AG04450 (cell line): ENCODE measurements at regions of chr1 and their contacts with region 1.

Region 1: GRCh38 chr1:58783993-58784757 is at the start of gene JUN:
- DNase-seq: peak; percentile 99
- H3K4me3 ChIP-seq: peak within 1 kb of the TSS; percentile 93
- H3K27ac ChIP-seq: peak within 1 kb of the TSS; percentile 99
- H3K27me3 ChIP-seq: no peaks in the 10 kb centered on the region
- CTCF ChIP-seq: no peak
- polyA plus RNA-seq, gene JUN: 48.7 and 56.5 TPM in 2 replicates

Region 2: DNA sequence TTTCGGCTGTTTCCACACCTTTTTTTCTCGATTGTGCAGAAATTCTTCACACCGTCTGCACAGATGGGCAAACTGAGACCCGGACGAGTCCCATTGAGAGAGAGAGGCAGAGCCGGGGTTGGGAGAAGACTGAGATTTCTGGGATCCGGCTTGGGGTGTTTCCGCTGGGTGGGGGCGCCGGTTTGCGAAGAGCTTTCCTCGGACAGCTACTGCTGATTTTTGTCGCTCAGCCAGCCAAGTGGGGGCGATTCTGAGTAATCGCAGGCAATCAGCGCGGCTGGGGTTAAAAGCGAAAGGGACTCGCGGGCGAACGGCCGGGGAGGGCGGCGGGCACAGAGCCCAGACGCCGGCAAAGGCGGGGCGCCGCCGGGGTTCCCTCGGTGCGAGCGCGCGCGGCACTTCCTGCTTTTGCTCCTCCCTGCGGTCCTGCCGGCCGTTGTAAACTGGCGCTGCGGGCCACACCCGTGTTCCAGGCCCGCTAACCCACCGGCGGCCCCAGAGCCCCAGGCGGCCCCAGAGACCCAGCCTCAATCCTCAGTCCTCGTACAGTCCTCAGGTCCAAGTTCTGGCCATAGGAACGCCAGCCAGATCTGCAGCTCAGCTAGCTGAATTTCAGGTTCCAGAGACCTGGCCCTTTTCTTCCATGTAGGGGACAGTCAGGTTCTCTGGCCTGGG is 32.0 kb after region 1 on chr1:
- CTCF ChIA-PET with region 1: no interaction called
- POLR2A ChIA-PET with region 1: interaction called, 10 read pairs
- DNase-seq: peak; percentile 70
- H3K4me3 ChIP-seq: peak overlapping the region; percentile 61
- H3K27ac ChIP-seq: peak overlapping the region; percentile 90
- H3K27me3 ChIP-seq: no peaks in the 10 kb centered on the region
- CTCF ChIP-seq: peak; percentile 12; the same call in 1 of the 2 replicates

Region 3: DNA sequence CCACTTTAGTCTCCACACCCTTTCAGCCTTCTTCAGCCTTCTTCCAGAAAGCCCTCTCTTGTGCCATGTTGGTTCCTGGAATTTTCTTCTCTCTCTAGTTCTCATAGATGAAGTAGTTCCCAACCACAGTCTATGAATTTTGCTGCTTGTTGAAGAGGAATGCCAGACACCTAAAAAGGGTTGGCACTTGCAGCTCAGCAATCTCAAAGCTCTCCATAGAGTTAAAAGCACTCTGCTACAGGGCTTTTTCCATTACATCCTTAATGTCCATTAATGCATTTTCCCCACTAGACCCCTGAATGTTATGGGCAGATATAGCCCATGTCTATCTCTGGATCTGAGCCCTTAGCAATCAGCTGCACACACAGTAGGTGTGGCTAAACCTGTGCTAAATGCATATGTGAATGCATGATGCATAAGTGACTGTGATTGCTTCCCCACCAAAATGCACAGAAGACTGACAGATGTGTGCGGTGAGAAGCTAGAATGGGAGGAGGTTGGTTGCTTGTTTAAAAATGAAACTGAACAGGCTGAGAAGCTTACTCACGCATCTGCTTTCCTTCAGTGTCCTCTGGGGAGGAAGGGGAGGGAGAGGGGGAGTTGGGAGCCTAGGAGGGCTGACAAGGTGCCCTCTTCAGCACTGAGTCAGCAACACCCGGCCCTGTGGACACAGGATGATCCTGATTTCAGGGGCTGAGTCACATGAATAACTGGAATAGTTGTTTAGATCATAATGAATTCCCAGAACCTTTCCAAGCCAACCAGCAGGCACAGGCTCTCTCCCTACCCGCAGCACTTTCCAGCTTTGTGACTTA is 366.6 kb after region 1 on chr1:
- CTCF ChIA-PET with region 1: no interaction called
- POLR2A ChIA-PET with region 1: interaction called, 12 read pairs
- DNase-seq: peak; percentile 99
- H3K4me3 ChIP-seq: peak overlapping the region; percentile 35
- H3K27ac ChIP-seq: peak overlapping the region; percentile 97
- H3K27me3 ChIP-seq: no peaks in the 10 kb centered on the region
- CTCF ChIP-seq: peak; percentile 2; the same call in 1 of the 2 replicates

Region 4: DNA sequence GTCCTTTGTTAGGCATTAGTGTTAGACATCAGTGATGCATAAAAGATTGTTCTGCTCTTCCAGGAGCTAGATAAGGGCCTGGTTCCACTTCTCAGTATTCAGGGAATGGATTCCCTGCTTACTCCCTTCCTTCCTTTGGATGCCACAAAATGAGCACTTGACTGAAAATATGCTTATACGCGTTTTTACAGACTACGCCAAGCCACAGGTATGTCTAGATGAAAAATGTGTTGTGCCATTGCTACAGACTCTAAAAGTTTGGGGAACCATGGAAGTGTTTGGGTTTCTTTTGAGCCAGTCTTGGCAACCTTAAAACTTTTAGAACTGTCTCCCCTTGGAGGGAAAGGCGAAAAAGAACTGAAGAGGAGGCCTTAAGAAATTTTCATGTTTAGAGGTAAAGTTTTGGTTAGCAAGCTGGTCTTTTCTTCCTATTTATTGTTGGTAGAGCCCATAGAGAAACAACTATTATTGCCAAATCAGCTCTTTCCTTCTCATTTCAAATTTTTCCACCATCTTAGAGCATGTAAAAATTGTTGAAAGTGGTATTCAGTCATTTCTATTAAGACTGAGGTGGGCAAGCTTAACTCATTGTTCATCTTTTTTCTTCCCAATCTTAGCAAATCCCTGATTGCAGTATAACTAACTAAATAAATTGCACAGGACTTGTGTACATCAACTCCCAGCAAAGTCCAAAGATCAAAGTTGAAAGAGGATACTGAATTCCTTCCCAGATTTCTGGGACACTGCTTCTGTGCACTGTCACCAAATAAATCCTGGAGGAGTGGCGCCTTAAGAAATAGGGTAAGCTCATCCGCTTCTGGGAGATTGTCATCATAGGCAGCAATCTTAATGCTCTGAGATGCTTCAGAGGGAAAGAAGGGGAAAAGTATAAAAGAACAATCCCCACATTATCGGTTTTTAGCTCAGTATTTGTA is 531.6 kb after region 1 on chr1:
- CTCF ChIA-PET with region 1: interaction called, 5 read pairs
- POLR2A ChIA-PET with region 1: interaction called, 13 read pairs
- DNase-seq: no peak
- H3K4me3 ChIP-seq: no peak overlapping the region
- H3K27ac ChIP-seq: no peak overlapping the region
- H3K27me3 ChIP-seq: no peaks in the 10 kb centered on the region
- CTCF ChIP-seq: no peak

Region 5: GRCh38 chr1:59699227-59699847 is 915.2 kb after region 1 on chr1:
- CTCF ChIA-PET with region 1: interaction called, 9 read pairs
- POLR2A ChIA-PET with region 1: interaction called, 14 read pairs
- DNase-seq: no peak
- H3K4me3 ChIP-seq: no peak overlapping the region
- H3K27ac ChIP-seq: no peak overlapping the region
- H3K27me3 ChIP-seq: no peaks in the 10 kb centered on the region
- CTCF ChIP-seq: peak; percentile 97

Region 6: DNA sequence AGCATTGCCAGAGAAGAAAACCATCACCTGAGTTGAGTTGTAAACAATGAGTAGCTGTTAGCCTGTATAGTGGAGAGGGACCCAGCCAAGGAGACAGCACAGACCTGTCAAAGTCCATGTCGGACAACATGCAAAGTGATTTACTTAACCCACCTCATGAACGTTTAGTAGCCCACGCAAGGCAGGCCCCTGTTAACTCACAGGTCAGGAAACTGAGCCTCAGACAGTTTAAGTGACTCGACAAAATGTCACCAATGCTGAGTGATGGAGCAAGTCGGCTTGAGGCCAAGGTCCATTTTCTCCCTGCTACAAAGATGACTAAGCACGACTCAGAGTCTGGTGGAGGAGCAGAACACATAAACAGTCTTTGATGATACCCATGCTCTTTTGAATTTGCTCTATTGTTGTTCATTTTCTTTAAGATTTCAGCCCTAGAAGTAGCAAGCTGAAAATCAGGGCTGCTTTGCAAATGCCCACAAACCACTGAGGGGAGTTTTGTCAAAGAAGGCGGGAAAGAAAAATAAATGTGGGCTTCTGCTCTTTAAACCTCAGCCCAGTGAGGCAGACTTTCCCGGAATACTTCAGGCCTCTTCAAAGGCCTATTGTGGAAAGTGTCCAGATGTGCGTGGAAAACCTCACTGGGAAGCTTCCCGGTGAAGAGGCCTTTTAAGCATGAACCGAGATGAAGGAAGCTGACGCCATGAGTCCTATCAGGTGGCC is 946.7 kb after region 1 on chr1:
- CTCF ChIA-PET with region 1: no interaction called
- POLR2A ChIA-PET with region 1: interaction called, 10 read pairs
- DNase-seq: peak; percentile 95
- H3K4me3 ChIP-seq: no peak overlapping the region
- H3K27ac ChIP-seq: peak overlapping the region; percentile 93
- H3K27me3 ChIP-seq: no peaks in the 10 kb centered on the region
- CTCF ChIP-seq: no peak